Dendritic cell treated with granulocyte-macrophage colony-stimulating factor and Interleukin-4, amounts not matched to agents 40 ng/mL and 50 ng/mL, for 4 days (primary cell): ENCODE measurements at regions of chr22 and their contacts with region 1.

Region 1: GRCh38 chr22:45645526-45646414 is 25.9 kb upstream of the ATXN10 start:
- H3K4me3 Mint-ChIP-seq: no peak overlapping the region
- H3K27ac Mint-ChIP-seq: no peak overlapping the region
- H3K4me1 Mint-ChIP-seq: peaks cover 10% of the 10 kb centered on the region
- H3K27me3 Mint-ChIP-seq: peaks cover 77% of the 10 kb centered on the region

Region 2: DNA sequence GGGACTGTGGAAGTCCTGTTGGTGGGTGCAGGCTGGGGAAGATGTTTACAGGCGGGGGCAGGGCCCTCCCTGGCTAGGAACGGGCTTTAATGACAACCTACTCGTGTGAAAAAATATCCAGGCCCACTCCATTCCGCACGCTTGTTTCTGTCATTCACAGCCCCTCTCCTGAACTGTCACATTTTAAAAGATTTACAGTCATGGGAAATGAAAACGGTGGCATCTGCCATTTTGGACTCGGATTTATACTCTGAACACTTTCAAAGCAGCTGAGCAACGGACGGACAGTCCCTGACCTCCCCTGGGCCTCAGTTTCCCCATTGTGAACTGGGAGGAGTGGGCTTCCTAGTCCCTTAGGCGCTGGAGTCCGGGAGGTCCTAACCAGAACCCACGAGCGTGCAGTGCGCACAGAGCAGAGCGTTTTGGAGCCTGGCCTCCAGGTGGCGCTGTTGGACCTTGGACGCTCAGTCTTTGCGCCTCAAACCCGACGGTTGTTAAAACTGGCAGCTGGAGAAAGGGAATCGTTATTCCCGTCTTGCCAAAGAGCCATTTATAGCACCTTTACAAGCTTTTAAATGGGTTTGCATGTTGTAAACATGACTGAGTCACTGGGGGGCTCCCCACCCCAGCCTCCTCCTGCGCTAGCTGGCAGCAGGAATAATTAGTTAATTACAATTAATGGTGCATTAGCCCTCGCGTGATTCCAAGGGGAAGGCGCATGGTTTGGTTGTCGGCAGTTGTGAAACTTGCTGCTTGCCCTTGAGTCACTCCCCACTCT is 67.8 kb before region 1 on chr22:
- intact Hi-C with region 1: loop called (anchors 2 kb)
- H3K4me3 Mint-ChIP-seq: no peak overlapping the region
- H3K27ac Mint-ChIP-seq: no peak overlapping the region
- H3K4me1 Mint-ChIP-seq: peaks cover 25% of the 10 kb centered on the region
- H3K27me3 Mint-ChIP-seq: peaks cover 55% of the 10 kb centered on the region

Region 3: DNA sequence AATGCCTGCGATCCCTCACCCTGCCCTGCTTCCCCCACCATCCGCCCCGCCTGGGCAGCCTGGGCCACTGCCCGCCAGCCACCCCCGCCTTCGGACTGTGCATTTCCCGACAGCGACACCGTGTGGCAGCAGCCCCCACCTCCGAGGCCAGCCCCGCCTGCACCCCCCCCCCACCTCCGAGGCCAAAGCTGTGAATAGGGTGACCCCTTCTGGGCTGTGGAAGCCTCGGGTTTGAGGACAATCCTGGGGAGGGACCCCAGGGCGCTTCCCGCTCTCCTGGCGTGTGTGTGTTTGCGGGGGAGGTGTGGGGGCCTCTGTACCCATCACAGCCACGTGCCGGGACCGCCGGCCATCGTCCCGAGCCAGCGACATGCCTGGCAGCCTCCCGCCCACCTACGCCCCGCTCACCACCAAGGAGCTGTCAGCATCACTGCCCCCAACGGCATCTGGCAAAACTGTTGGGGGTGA is 470.8 kb after region 1 on chr22:
- intact Hi-C with region 1: loop called (anchors 5 kb)
- H3K4me3 Mint-ChIP-seq: no peak overlapping the region
- H3K27ac Mint-ChIP-seq: peak overlapping the region; percentile 43
- H3K4me1 Mint-ChIP-seq: peaks cover 20% of the 10 kb centered on the region
- H3K27me3 Mint-ChIP-seq: peaks cover 9% of the 10 kb centered on the region